Aorta (tissue), 5 donors: ENCODE measurements at regions of chr4 and their contacts with region 1.

Region 1: DNA sequence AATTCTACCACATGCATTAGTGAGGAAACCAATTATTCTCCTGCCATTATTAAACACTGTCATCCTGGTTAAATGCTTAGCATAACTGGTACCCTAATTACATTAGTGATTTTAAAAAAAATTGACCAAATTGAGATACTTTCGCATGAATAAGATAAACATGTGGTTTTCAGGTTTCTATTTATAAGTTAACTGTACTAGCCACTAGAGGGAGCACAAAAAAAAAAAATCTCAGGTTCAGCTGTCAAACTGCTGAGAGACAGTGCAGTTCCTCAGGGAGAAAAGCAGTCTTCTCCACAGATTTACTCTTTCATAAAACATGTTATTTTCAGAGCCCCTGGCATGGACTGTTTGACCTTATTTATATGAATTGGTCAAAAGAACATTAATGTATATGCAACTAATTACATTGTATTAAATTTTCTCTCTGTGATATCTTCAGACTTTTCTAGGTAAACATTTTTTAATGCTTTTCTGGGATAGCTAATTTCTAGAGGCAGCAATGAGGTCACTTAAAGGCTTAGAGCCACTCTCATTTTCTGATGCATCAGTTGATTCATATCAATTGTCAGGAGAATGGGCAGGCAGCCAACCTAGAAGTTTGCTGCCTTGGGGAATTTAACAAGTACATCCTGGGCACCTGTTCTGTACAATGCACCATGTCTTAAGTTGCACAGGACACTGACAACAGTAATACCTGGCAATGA is 167.5 kb downstream of the CDS1 start:
- DNase-seq: no peak
- ATAC-seq: no peak
- H3K4me3 ChIP-seq: no peak overlapping the region
- H3K27ac ChIP-seq: no peak overlapping the region
- H3K4me1 ChIP-seq: no peaks in the 10 kb centered on the region
- H3K27me3 ChIP-seq: no peaks in the 10 kb centered on the region

Region 2: GRCh38 chr4:84594724-84595123 is 155.7 kb before region 1 on chr4:
- intact Hi-C with region 1: no loop called
- DNase-seq: no peak
- ATAC-seq: no peak
- H3K4me3 ChIP-seq: no peak overlapping the region
- H3K27ac ChIP-seq: no peak overlapping the region
- H3K4me1 ChIP-seq: no peaks in the 10 kb centered on the region
- H3K27me3 ChIP-seq: no peaks in the 10 kb centered on the region

Region 3: GRCh38 chr4:84691170-84691691 is 59.2 kb before region 1 on chr4:
- intact Hi-C with region 1: no loop called
- DNase-seq: no peak
- ATAC-seq: peak; percentile 36
- H3K4me3 ChIP-seq: no peak overlapping the region
- H3K27ac ChIP-seq: peak overlapping the region in 1 of 2 donors; percentile 33
- H3K4me1 ChIP-seq: no peaks in the 10 kb centered on the region
- H3K27me3 ChIP-seq: no peaks in the 10 kb centered on the region

Region 4: GRCh38 chr4:84804136-84804535 is 53.7 kb after region 1 on chr4:
- intact Hi-C with region 1: loop called in 1 of 2 experiments (anchors 5 kb)
- DNase-seq: no peak
- ATAC-seq: no peak
- H3K4me3 ChIP-seq: no peak overlapping the region
- H3K27ac ChIP-seq: no peak overlapping the region
- H3K4me1 ChIP-seq: peaks cover 3% of the 10 kb centered on the region in 2 donors
- H3K27me3 ChIP-seq: no peaks in the 10 kb centered on the region

Region 5: DNA sequence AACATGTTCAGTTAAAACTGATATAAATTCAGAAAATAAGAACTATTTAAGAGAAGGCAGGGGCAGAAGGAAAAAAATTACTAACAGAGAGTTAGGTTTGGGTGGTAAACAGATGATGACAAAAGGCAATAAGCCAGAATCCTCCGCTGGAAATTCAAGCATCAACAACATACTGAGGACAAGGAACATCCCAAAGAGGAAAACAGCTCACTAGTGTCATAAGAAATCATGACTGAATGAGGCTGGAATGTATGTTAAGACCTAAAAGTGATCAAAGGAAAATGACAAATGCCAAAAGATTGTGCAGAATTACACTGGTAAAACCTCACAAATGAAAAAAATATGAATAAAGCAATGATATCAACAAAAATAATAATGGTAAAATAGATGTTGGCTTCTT is 127.7 kb after region 1 on chr4:
- intact Hi-C with region 1: no loop called
- DNase-seq: no peak
- ATAC-seq: no peak
- H3K4me3 ChIP-seq: no peak overlapping the region
- H3K27ac ChIP-seq: no peak overlapping the region
- H3K4me1 ChIP-seq: no peaks in the 10 kb centered on the region
- H3K27me3 ChIP-seq: no peaks in the 10 kb centered on the region

Region 6: DNA sequence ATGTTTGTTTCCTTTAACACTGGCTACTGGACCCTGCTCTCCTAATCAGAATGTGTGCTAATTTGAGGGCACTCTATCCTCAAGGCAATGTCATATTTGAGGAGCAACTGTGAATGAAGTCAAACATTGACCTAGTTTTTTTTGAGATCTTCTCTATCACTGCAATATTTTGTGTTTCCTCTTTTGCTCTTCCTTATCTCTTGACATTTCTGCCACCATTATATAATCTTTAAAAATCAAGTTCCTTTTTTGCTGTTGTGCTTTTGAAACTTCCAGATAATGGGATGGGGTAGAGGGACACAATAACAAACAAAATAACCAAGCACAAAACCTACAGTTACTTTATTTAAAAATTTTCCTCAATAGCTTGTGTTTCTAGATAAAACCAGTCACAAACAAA is 223.4 kb after region 1 on chr4:
- intact Hi-C with region 1: loop called (anchors 2 kb)
- DNase-seq: no peak
- ATAC-seq: no peak
- H3K4me3 ChIP-seq: no peak overlapping the region
- H3K27ac ChIP-seq: no peak overlapping the region
- H3K4me1 ChIP-seq: no peaks in the 10 kb centered on the region
- H3K27me3 ChIP-seq: no peaks in the 10 kb centered on the region